ENCODE measurements at regions of chr1 and their contacts with region 1.

Region 1: GRCh38 chr1:18597160-18598042 is 33.2 kb upstream of the PAX7 start:
- DNase-seq: peak; percentile 63
- ATAC-seq: peak; percentile 98
- H3K4me3 ChIP-seq: no peak overlapping the region
- H3K27ac ChIP-seq: no peak overlapping the region
- H3K4me1 ChIP-seq: no peaks in the 10 kb centered on the region
- H3K27me3 ChIP-seq: peaks cover 25% of the 10 kb centered on the region
- CTCF ChIP-seq: peak; percentile 97

Region 2: GRCh38 chr1:18820791-18821641 is 223.6 kb after region 1 on chr1:
- CTCF ChIA-PET with region 1: interaction called, 9 read pairs
- POLR2A ChIA-PET with region 1: no interaction called
- intact Hi-C with region 1: loop called (anchors 1 kb)
- DNase-seq: peak; percentile 84
- ATAC-seq: peak; percentile 98
- H3K4me3 ChIP-seq: no peak overlapping the region
- H3K27ac ChIP-seq: no peak overlapping the region
- H3K4me1 ChIP-seq: no peaks in the 10 kb centered on the region
- H3K27me3 ChIP-seq: peaks cover 19% of the 10 kb centered on the region
- CTCF ChIP-seq: peak; percentile 92

Region 3: DNA sequence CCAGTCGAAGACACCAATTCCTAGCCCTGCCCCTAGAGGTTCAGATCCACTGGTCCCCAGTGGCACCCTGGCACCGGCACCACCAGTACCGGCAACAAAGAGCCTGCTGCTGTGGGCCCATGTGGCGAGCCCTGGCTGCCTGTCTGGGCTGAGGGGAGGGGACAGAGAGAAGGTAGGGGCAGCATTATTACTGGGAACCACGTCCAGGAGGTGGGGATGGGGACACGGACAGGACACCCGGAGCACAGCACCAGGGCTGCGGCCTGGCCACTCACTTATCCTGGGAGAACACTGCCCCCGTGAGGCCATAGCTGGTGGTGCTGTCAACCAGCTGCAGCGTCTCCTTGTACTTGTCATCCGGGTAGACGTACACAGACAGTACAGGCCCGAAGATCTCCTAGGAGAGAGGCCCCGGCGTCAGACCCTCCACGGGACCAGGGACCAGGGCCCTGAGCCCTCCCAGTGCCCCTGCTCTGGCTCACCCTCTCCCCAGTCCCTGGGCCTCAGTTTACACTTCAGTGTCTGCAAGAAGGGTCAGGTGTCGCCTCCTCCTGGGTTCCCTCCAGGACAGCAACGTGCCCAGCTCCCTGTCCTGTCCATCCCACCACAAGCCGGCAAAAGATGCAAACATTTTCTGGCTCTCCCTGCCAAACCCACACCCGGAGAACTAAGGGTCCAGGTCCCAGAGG is 277.9 kb after region 1 on chr1:
- CTCF ChIA-PET with region 1: interaction called, 7 read pairs
- POLR2A ChIA-PET with region 1: no interaction called
- intact Hi-C with region 1: loop called (anchors 1 kb)
- DNase-seq: peak; percentile 88
- ATAC-seq: peak; percentile 95
- H3K4me3 ChIP-seq: no peak overlapping the region
- H3K27ac ChIP-seq: no peak overlapping the region
- H3K4me1 ChIP-seq: no peaks in the 10 kb centered on the region
- H3K27me3 ChIP-seq: no peaks in the 10 kb centered on the region
- CTCF ChIP-seq: peak; percentile 83

Measured in PC-3 (cell line).